Dorsolateral prefrontal cortex (tissue), 120 donors: ENCODE measurements at regions of chr7 and their contacts with region 1.

Region 1: GRCh38 chr7:51366930-51367613 is 50.5 kb upstream of the COBL start:
- DNase-seq: peak in 7 of 10 donors; percentile 41 to 66 (median 56)
- H3K4me3 ChIP-seq: no peak overlapping the region
- H3K27ac ChIP-seq: peak overlapping the region in 5 of 59 donors; percentile 2 to 39 (median 16)
- H3K27me3 ChIP-seq: no peaks in the 10 kb centered on the region
- CTCF ChIP-seq: peak; percentile 63 to 93 (median 84)

Region 2: DNA sequence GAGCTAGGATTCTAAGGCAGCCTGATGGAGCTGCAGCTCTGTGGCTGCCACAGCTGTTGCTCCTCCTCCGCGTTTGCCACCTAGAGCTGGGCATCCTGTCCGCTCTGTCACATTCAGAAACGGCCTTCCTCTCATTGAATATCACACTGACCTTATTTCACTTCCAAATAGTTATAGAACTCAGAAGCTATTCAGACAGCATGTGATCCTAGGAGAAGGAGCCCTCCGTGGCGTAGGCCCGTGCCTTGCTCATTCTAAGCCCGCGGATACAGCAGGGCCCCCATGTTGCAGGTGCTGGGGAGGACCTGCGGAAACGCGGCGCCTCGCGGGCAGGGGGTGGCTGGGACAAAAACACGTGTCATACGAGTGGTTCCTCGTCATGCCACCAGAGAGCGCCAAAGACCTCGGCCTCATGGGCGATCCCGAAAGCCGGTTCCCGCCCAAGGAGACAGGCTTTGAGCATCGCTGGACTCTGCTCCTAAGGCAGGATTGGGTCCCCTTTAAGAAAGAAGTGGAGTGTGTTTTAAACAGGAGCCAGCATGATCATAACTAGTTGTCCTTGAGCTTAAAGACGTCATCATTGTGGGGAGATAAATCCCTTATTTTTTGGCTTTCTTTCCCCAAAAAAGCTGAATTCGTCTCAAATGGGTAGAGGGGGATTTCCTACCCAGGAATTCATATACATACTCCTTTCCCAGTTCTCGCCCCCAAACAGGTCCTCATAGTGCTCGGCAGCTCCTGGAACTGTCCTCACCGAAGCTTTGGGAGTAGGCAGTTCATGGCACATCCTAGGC is 899.1 kb before region 1 on chr7:
- intact Hi-C with region 1: loop called (anchors 5 to 10 kb)
- DNase-seq: peak; percentile 73 to 87 (median 84)
- H3K4me3 ChIP-seq: peak overlapping the region in 46 of 59 donors; percentile 5 to 61 (median 32)
- H3K27ac ChIP-seq: peak overlapping the region in 5 of 59 donors; percentile 3 to 28 (median 13)
- H3K27me3 ChIP-seq: no peaks in the 10 kb centered on the region
- CTCF ChIP-seq: peak; percentile 75 to 97 (median 90)

Region 3: GRCh38 chr7:50632561-50633413 is 734.3 kb before region 1 on chr7:
- intact Hi-C with region 1: loop called in 1 of 2 experiments (anchors 10 kb)
- DNase-seq: no peak
- H3K4me3 ChIP-seq: no peak overlapping the region
- H3K27ac ChIP-seq: no peak overlapping the region
- H3K27me3 ChIP-seq: no peaks in the 10 kb centered on the region
- CTCF ChIP-seq: peak; percentile 28 to 73 (median 64)

Region 4: GRCh38 chr7:51187941-51188340 is 179.1 kb before region 1 on chr7:
- intact Hi-C with region 1: loop called in 1 of 2 experiments (anchors 5 kb)
- DNase-seq: peak; percentile 61 to 82 (median 78)
- H3K4me3 ChIP-seq: no peak overlapping the region
- H3K27ac ChIP-seq: peak overlapping the region; percentile 38 to 92 (median 84)
- H3K27me3 ChIP-seq: no peaks in the 10 kb centered on the region
- CTCF ChIP-seq: peak in 54 of 56 donors; percentile 24 to 79 (median 62)